T-cell (primary cell): ENCODE measurements at regions of chr1 and their contacts with region 1.

Region 1: DNA sequence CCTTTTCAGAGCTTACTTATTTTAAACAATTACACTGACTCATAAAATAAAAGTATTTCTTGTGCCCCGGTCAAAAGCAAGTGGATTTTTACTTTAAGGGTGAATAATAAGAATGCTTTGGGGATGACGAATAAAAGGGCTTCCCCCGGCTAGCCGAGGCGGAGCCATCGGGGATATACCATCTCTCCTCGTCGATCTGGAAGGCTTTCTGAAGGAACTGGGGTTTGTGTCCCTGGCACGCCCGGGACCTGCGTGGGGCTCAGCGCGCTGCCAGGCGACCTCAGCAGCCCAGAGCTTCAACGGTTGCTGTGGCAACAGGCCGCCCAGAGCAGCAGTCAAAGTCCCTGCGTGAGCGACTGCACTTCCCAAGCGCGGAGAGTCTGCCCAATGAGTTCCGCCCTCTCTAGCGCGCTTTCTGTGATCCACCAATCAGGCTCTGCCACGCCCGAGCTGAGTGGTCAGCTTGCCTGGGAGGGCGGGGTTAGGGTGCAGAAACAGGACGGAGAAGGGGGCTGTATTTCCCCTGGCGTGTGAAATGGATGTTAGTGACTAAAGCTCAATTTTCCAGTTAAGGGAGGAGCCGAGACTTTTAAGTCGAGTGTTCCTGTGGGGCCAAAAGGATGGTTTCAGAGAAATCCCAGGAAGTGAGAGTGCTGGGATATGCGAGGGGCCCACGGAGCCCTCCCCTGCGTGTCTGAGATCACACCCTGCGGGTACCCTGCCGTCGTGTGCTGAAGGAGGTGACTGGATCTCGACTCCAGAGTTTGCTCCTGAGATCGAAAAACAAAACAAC is 33.0 kb upstream of the MGST3 start:
- DNase-seq: peak; percentile 74 to 92 (median 83)
- ATAC-seq: peak; percentile 97 to 98 (median 98)
- H3K4me3 ChIP-seq: peak overlapping the region; percentile 67 to 76
- H3K4me3 Mint-ChIP-seq: peak overlapping the region; percentile 85 to 88 (median 87)
- H3K27ac ChIP-seq: peak overlapping the region; percentile 52
- H3K27ac Mint-ChIP-seq: peak overlapping the region in 1 of 2 donors; percentile 57
- H3K4me1 ChIP-seq: peaks cover 9 to 19% of the 10 kb centered on the region in 2 experiments
- H3K4me1 Mint-ChIP-seq: peaks cover 22 to 32% (median 30%) of the 10 kb centered on the region in 3 donors
- H3K27me3 ChIP-seq: peaks cover 4 to 14% of the 10 kb centered on the region in 2 experiments
- H3K27me3 Mint-ChIP-seq: peaks cover 33 to 38% of the 10 kb centered on the region in 2 donors

Region 2: DNA sequence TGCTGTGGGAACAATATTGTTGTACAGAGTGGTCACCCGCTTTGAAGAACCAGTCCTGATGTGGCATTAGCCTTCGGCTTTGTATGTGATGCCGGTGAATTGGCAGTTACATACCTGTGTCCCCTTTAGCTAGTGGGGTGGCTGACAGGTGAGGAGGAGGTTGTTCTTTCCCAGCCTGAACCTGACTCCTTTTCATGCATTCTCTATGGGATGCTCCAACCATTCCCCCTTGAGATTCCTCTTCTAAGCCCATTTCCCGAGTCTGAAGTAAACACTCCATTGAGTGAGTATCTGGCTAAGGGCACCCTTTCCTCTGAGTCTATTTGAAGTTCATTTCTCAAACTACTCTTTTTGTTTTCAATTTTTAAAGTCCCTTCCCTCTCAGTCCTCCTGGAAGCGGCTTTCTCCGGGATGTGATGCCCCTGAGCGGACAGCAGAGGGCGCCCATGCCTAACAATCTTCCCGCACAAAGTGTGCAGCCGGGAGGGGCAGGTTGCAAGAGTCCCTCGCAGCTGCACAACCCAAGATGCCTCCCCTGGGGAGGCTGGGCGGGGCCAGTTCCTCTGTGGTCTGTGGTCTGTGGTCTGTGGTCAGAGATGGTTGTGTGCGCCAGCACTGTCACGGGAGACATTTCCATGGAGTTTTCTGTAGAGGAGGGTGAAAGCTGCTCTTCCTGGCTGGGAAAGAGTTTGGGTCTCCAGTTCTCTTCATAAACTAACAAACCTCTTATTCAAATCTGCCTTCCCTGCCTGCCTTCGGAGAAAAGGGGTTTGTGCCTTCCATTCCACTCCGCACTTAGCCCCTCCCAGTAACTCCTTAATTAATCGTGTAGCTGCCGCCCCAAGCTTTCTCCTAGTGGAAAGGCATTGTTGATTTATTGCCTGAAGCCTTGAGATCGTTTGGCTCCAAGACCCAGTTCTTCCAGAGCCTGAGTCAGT is 205.2 kb before region 1 on chr1:
- CTCF ChIA-PET with region 1: interaction called, 30 to 53 read pairs
- POLR2A ChIA-PET with region 1: interaction called in 1 of 2 experiments, 3 read pairs
- DNase-seq: peak; percentile 75 to 94 (median 86)
- ATAC-seq: peak; percentile 99 to 100 (median 99)
- H3K4me3 ChIP-seq: peak overlapping the region; percentile 18 to 24
- H3K4me3 Mint-ChIP-seq: peak overlapping the region; percentile 26 to 69 (median 64)
- H3K27ac ChIP-seq: no peak overlapping the region
- H3K27ac Mint-ChIP-seq: peak overlapping the region; percentile 45 to 59
- H3K4me1 ChIP-seq: peaks cover 4 to 16% of the 10 kb centered on the region in 2 experiments
- H3K4me1 Mint-ChIP-seq: peaks cover 16 to 31% (median 19%) of the 10 kb centered on the region in 3 donors
- H3K27me3 ChIP-seq: peaks cover 26 to 42% of the 10 kb centered on the region in 2 experiments
- H3K27me3 Mint-ChIP-seq: peaks cover 62 to 78% of the 10 kb centered on the region in 2 donors

Region 3: DNA sequence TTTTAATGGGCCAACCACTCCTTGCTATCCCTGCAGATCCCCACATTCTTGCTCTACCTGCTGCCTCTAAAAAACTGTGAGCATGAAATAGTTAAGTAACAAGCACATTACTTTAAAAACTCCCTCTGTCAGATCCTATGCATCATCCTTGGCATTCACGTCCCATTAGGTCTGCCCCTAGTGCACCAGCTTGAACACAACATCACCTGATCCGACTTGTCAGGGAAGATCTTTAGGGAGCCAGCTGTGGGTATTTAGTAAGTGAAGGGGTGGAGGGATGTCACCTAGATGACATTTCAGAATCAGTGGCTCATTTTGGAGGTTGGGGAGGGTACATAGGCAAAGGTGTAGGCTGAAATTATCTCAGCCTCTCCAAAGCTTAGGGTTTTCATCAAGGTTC is 186.7 kb before region 1 on chr1:
- CTCF ChIA-PET with region 1: interaction called in 1 of 2 experiments, 11 read pairs
- POLR2A ChIA-PET with region 1: no interaction called
- DNase-seq: no peak
- ATAC-seq: no peak
- H3K4me3 ChIP-seq: no peak overlapping the region
- H3K4me3 Mint-ChIP-seq: no peak overlapping the region
- H3K27ac ChIP-seq: no peak overlapping the region
- H3K27ac Mint-ChIP-seq: no peak overlapping the region
- H3K4me1 ChIP-seq: no peaks in the 10 kb centered on the region
- H3K4me1 Mint-ChIP-seq: no peaks in the 10 kb centered on the region
- H3K27me3 ChIP-seq: peaks cover 9 to 17% of the 10 kb centered on the region in 2 experiments
- H3K27me3 Mint-ChIP-seq: peaks cover 41 to 46% of the 10 kb centered on the region in 2 donors

Region 4: GRCh38 chr1:165630629-165631341 is 32.7 kb after region 1 on chr1 and contains the start of gene MGST3:
- CTCF ChIA-PET with region 1: interaction called, 5 to 11 read pairs
- POLR2A ChIA-PET with region 1: interaction called in 1 of 2 experiments, 3 read pairs
- DNase-seq: peak; percentile 83 to 94 (median 90)
- ATAC-seq: peak; percentile 92 to 98 (median 94)
- H3K4me3 ChIP-seq: peak within 1 kb of the TSS; percentile 69 to 74
- H3K4me3 Mint-ChIP-seq: no peak within 1 kb of the TSS
- H3K27ac ChIP-seq: peak within 1 kb of the TSS; percentile 84
- H3K27ac Mint-ChIP-seq: peak within 1 kb of the TSS in 1 of 2 donors; percentile 43
- H3K4me1 ChIP-seq: peaks cover 11 to 21% of the 10 kb centered on the region in 2 experiments
- H3K4me1 Mint-ChIP-seq: peaks cover 12 to 24% (median 23%) of the 10 kb centered on the region in 3 donors
- H3K27me3 ChIP-seq: no peaks in the 10 kb centered on the region
- H3K27me3 Mint-ChIP-seq: no peaks in the 10 kb centered on the region
- total RNA-seq, gene MGST3: 33.1 to 66.7 (median 40.4) TPM

Region 5: DNA sequence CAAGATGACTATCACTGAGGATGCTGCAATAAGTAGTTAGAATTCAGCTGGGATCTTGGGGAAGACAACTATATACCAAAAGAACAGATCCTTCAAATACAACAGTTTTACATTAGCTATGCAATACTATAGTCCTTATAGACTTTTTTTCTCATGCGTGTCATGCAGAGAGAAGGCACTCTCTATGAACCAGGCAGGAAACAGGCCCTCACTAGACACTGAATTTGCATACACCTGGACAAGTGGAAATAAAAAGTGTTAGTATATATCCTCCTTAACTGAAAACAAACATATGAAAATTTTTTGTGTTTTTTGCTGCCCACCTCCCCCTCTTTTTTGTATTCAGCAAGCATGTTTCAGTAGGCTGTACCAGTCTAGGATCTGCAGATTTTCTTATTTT is 140.7 kb after region 1 on chr1:
- CTCF ChIA-PET with region 1: no interaction called
- POLR2A ChIA-PET with region 1: no interaction called
- DNase-seq: no peak
- ATAC-seq: no peak
- H3K4me3 ChIP-seq: no peak overlapping the region
- H3K4me3 Mint-ChIP-seq: no peak overlapping the region
- H3K27ac ChIP-seq: no peak overlapping the region
- H3K27ac Mint-ChIP-seq: no peak overlapping the region
- H3K4me1 ChIP-seq: no peaks in the 10 kb centered on the region
- H3K4me1 Mint-ChIP-seq: peaks cover 5 to 18% (median 17%) of the 10 kb centered on the region in 3 donors
- H3K27me3 ChIP-seq: no peaks in the 10 kb centered on the region
- H3K27me3 Mint-ChIP-seq: no peaks in the 10 kb centered on the region

Region 6: GRCh38 chr1:165898837-165899236 is 300.8 kb after region 1 on chr1:
- CTCF ChIA-PET with region 1: no interaction called
- POLR2A ChIA-PET with region 1: no interaction called
- DNase-seq: no peak
- ATAC-seq: no peak
- H3K4me3 ChIP-seq: no peak overlapping the region
- H3K4me3 Mint-ChIP-seq: no peak overlapping the region
- H3K27ac ChIP-seq: no peak overlapping the region
- H3K27ac Mint-ChIP-seq: no peak overlapping the region
- H3K4me1 ChIP-seq: peaks cover 0 to 7% of the 10 kb centered on the region in 2 experiments
- H3K4me1 Mint-ChIP-seq: peaks cover 0 to 6% (median 5%) of the 10 kb centered on the region in 3 donors
- H3K27me3 ChIP-seq: no peaks in the 10 kb centered on the region
- H3K27me3 Mint-ChIP-seq: no peaks in the 10 kb centered on the region